Activated T-helper 1 cell treated with anti-CD3 and anti-CD28 coated beads, Interleukin-12 subunit alpha, Interleukin-12 subunit beta, Interleukin-2, Interleukin-4 antibody, amounts not matched to agents 30 ng/mL and 10 ng/mL and 1 ng/mL, durations not matched to agents 14 hours and 24 hours and 36 hours (primary cell): ENCODE measurements at regions of chr1 and their contacts with region 1.

Region 1: GRCh38 chr1:15417365-15417934 is 7.8 kb downstream of the EFHD2 start:
- DNase-seq: peak; percentile 64
- H3K4me3 Mint-ChIP-seq: peak overlapping the region; percentile 62
- H3K27ac Mint-ChIP-seq: peak overlapping the region; percentile 84
- H3K4me1 Mint-ChIP-seq: peaks cover 65% of the 10 kb centered on the region
- H3K27me3 Mint-ChIP-seq: no peaks in the 10 kb centered on the region

Region 2: GRCh38 chr1:15251857-15252835 is 165.3 kb before region 1 on chr1:
- intact Hi-C with region 1: loop called (anchors 2 kb)
- DNase-seq: no peak
- H3K4me3 Mint-ChIP-seq: no peak overlapping the region
- H3K27ac Mint-ChIP-seq: peak overlapping the region; percentile 73
- H3K4me1 Mint-ChIP-seq: peaks cover 51% of the 10 kb centered on the region
- H3K27me3 Mint-ChIP-seq: peaks cover 52% of the 10 kb centered on the region